Testis (tissue), 5 donors: ENCODE measurements at regions of chr1 and their contacts with region 1.

Region 1: DNA sequence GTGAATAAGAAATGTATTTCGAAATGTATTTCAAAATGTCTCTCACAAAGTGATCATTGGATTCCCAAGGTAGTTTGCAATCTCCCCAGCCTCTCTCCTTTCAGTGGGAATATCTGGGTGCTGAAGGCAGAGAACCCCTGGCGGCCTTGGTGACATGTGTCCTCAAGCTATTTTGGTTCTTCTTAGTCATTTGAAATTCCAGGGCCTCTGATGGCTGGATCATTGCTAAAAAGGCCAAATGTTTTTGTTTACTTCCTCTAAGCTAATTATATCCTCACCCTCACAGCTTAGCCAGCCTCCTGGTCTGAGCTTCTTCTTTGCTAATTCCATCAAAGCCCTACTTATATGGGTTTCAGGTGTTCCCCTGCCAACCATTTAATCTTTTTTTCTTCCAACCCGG is 71.2 kb downstream of the LRRC40 start:
- DNase-seq: no peak
- H3K4me3 ChIP-seq: no peak overlapping the region
- H3K27ac ChIP-seq: no peak overlapping the region
- H3K4me1 ChIP-seq: no peaks in the 10 kb centered on the region
- H3K27me3 ChIP-seq: no peaks in the 10 kb centered on the region
- CTCF ChIP-seq: no peak
- POLR2A ChIP-seq: no peak

Region 2: DNA sequence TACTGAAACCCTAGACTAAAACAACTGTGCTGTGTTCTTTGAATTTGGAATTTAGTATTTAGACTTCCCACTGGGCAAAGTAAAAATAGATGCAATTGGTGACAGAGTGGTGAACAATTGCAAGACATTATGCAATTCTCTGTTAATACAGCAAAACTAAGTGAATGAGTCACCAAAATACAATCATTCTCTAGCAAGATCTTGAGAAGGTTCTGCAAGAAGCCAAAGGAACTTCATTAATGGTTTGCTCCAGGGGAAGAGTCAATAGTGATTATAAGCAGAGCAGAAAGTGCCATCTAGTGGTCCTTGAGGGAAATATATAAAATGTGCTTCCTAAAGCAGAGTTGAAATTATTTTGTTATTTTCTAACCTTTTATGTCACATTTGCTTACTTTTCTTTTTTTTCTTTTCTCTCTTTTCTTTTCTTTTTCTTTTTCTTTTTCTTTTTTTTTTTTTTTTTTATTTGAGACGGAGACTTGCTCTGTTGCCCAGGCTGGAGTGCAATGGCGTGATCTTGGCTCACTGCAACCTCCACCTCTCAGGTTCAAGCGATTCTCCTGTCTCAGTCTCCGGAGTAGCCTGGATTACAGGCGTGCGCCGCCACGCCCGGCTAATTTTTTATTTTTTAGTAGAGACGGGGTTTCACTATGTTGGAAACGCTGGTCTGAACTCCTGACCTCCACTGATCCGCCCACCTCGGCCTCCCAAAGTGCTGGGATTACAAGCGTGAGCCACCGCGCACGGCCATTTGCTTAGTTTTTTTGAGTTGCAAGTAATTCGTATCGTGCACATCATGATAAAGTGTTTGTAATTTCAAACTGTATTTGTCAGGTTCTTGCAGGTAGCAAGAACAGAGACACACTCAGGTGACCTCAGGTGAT is 376.1 kb after region 1 on chr1:
- intact Hi-C with region 1: loop called (anchors 5 kb)
- DNase-seq: no peak
- H3K4me3 ChIP-seq: no peak overlapping the region
- H3K27ac ChIP-seq: no peak overlapping the region
- H3K4me1 ChIP-seq: no peaks in the 10 kb centered on the region
- H3K27me3 ChIP-seq: no peaks in the 10 kb centered on the region
- CTCF ChIP-seq: peak; percentile 39 to 72 (median 57)
- POLR2A ChIP-seq: no peak